Activated T-helper 1 cell treated with anti-CD3 and anti-CD28 coated beads, Interleukin-12 subunit alpha, Interleukin-12 subunit beta, Interleukin-2, Interleukin-4 antibody, amounts not matched to agents 30 ng/mL and 10 ng/mL and 1 ng/mL, durations not matched to agents 14 hours and 24 hours and 36 hours (primary cell): ENCODE measurements at regions of chr20 and their contacts with region 1.

Region 1: DNA sequence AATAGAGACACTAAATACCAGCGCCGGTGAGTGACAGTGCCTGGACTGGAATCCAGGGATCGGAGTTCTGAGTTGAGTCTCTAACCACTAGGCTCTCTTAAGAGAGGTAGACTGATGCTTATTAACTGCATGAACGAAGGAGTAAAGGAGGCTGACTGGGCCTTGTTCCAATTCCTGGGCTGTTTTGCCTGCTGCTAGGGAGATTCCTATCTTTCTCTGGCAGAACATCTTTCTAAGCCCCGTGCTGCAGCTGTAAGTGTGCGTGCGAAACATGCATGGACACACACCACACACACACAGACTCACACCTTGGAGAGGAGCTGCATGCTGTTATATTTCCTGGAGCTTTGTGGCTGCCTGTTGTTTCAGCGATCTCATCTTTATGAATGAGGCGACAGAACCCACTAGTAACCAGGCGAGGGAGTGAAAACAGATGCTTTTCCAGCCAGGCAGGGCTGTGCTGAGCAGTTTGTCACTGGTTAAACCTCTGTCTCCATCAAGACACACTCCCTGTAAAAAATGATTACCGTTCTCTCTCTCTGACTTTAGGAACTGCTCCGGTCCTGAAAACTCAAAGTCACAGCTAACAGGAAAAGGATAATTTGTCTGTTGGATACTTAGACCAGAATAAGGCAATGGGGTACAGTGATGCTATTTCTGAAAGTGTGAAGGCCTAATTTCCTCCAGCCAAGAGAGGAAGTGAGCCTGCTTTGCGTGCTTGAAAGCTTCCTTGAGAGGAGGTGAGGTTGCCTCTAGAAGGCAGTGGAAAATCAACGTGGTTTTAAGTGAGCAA is 157.4 kb upstream of the ZNF217 start:
- DNase-seq: peak; percentile 51
- H3K4me3 Mint-ChIP-seq: peak overlapping the region; percentile 60
- H3K27ac Mint-ChIP-seq: peak overlapping the region; percentile 98
- H3K4me1 Mint-ChIP-seq: peaks cover 74% of the 10 kb centered on the region
- H3K27me3 Mint-ChIP-seq: no peaks in the 10 kb centered on the region

Region 2: GRCh38 chr20:53578492-53579222 is 172.4 kb before region 1 on chr20:
- intact Hi-C with region 1: loop called (anchors 1 kb)
- DNase-seq: peak; percentile 62
- H3K4me3 Mint-ChIP-seq: peak overlapping the region; percentile 83
- H3K27ac Mint-ChIP-seq: peak overlapping the region; percentile 88
- H3K4me1 Mint-ChIP-seq: peaks cover 85% of the 10 kb centered on the region
- H3K27me3 Mint-ChIP-seq: no peaks in the 10 kb centered on the region

Region 3: DNA sequence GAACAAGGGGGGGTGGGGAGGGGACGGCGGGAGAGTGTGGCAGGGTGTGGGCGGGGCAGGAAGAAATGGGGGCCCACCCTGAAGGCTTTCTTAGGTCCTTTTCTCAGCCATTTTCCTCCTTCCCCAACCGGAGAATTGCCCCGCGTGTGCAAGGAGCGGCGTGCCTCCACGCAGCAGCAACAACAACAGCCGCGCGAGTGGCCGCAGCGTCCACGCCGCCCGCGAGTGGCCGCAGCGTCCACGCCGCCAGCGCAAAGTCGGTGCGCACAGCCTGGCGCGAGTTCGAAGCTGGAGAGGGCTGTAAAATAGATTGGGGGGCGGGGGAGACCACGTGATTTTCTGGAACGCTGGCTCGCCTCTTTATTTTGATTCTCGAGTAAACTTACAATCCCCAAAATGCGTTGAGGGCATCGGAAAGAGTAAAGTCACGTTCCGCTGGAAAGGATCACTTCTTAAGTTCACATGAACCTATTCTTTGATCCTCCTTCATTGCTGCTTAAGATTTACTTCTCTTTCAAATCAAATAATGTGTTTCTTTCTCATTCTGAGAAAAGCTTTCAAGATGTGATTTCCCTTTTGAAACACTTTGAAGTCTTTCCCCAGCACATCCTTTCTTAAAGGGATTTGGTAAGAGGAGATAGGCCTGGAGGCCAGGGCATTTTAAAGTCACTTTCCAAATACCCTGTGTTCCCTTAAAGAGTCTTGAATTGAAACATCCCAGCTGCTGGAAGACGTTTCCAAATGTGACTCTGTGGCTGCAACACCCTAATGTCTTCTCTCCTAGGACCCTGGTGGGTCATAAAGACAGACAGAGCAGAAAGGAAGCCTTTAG is 90.7 kb before region 1 on chr20:
- intact Hi-C with region 1: loop called (anchors 1 kb)
- DNase-seq: no peak
- H3K4me3 Mint-ChIP-seq: peak overlapping the region; percentile 75
- H3K27ac Mint-ChIP-seq: peak overlapping the region; percentile 87
- H3K4me1 Mint-ChIP-seq: peaks cover 71% of the 10 kb centered on the region
- H3K27me3 Mint-ChIP-seq: no peaks in the 10 kb centered on the region

Region 4: DNA sequence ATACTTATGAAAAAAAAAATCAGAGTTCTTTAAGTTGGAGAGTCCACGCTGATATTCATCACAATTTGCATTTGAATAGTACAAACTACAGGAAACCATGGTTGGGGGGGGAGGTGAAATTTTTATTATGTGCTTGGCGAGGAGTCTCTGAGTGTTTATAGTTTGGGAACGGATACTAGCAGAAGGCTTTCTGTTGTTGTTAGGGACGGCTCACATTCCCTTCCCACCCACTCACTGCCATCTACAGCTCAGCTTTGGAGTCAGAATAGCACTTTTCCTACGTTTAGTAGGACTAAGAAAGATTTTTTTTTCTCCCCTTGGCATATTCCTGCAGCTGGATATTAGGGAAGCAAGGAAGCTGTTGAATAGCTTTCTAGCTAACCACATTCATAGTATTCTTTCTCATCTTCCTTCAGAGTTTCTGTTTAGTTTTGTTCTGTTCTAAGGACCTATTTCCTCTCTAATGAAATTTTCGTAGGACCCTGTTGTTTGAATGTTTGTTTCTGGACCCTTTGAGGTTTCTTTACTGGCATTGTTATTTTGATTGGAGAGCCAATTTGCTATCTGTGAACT is 77.7 kb after region 1 on chr20:
- intact Hi-C with region 1: loop called (anchors 2 kb)
- DNase-seq: no peak
- H3K4me3 Mint-ChIP-seq: peak overlapping the region; percentile 84
- H3K27ac Mint-ChIP-seq: peak overlapping the region; percentile 90
- H3K4me1 Mint-ChIP-seq: peaks cover 48% of the 10 kb centered on the region
- H3K27me3 Mint-ChIP-seq: no peaks in the 10 kb centered on the region

Region 5: GRCh38 chr20:53891306-53891944 is 140.4 kb after region 1 on chr20:
- intact Hi-C with region 1: loop called (anchors 1 kb)
- DNase-seq: no peak
- H3K4me3 Mint-ChIP-seq: no peak overlapping the region
- H3K27ac Mint-ChIP-seq: no peak overlapping the region
- H3K4me1 Mint-ChIP-seq: peaks cover 40% of the 10 kb centered on the region
- H3K27me3 Mint-ChIP-seq: no peaks in the 10 kb centered on the region

Region 6: DNA sequence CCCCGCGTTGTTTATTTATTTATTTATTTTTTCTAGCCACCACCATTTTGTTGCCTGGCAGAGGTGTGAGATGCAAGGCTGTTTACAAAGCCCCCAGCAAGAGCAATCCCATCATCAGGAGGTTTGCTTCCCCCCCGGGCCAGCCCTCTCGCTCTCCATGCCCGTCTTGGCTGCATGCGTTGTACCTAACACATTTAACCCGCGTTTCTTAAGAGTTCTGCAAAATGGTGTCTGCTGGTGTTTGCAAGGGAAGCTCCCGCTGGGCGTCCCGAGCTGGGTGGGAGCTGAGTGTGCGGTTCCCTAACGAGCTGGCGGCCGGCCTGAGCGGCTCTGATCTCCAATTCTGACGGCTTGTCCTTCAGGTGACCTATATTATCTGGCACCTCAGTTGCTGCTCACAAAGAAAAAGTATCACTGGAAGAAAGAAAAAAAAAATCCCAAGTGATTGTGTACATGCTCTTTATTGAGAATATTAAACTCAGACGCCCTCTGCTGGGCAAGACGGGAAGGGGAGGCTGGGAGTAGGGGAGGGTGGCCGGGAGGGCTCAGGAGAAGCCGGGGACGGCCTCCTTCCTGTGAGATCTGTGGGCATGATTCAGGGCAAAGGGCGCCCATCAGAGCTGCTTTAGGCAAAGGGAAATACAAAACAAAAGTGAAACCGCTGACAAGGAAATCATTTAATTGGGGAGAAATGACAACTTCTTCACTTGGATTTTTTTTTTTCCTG is 164.6 kb after region 1 on chr20:
- intact Hi-C with region 1: loop called (anchors 1 kb)
- DNase-seq: peak; percentile 84
- H3K4me3 Mint-ChIP-seq: peak overlapping the region; percentile 89
- H3K27ac Mint-ChIP-seq: peak overlapping the region; percentile 93
- H3K4me1 Mint-ChIP-seq: peaks cover 42% of the 10 kb centered on the region
- H3K27me3 Mint-ChIP-seq: no peaks in the 10 kb centered on the region